Activated naive CD8-positive, alpha-beta T cell treated with anti-CD3 and anti-CD28 coated beads, Interleukin-2, amount 10 ng/mL, durations not matched to agents 7 days and 5 days (primary cell): ENCODE measurements at regions of chr2 and their contacts with region 1.

Region 1: DNA sequence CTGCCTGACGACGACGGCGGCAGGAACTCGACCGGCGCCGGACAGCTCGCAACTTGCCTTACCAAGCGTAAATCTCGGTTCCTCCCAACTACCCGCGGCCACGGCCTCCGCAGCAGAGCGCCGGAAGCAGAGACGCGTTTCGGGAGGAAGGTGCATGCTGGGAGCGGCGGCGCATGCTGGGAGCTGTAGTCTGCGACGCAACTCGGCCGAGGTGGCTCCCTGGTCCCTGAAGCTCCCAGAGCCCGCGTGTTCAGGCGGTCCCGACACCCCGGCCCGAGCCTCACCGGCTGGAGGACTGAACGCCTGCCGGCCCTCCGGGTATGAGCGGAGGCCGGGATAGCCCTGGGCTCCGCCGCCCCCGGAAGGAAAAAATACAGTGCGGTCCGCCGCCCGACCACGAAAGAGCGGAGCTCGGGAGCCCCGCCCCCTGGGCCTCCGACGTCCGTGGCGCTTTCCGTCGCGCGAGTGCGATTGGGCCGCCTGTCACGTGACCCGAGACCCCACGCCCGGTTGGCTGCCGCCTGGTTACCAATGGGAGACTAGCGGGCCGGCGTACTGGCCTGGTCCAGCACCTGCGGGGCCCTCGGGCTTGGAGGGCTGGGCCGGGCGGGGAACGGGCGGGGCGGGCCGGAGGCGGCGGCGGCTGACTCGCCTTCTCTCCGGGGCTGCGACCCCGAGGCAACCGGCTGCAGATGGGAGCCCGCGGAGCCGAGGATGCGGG is at the start of gene CAPN10:
- DNase-seq: peak; percentile 98
- ATAC-seq: peak; percentile 89
- H3K4me3 Mint-ChIP-seq: peak within 1 kb of the TSS; percentile 95
- H3K27ac Mint-ChIP-seq: peak within 1 kb of the TSS; percentile 95
- H3K4me1 Mint-ChIP-seq: peaks cover 39% of the 10 kb centered on the region
- H3K27me3 Mint-ChIP-seq: no peaks in the 10 kb centered on the region
- total RNA-seq, gene CAPN10: 72.3 to 74.2 TPM

Region 2: DNA sequence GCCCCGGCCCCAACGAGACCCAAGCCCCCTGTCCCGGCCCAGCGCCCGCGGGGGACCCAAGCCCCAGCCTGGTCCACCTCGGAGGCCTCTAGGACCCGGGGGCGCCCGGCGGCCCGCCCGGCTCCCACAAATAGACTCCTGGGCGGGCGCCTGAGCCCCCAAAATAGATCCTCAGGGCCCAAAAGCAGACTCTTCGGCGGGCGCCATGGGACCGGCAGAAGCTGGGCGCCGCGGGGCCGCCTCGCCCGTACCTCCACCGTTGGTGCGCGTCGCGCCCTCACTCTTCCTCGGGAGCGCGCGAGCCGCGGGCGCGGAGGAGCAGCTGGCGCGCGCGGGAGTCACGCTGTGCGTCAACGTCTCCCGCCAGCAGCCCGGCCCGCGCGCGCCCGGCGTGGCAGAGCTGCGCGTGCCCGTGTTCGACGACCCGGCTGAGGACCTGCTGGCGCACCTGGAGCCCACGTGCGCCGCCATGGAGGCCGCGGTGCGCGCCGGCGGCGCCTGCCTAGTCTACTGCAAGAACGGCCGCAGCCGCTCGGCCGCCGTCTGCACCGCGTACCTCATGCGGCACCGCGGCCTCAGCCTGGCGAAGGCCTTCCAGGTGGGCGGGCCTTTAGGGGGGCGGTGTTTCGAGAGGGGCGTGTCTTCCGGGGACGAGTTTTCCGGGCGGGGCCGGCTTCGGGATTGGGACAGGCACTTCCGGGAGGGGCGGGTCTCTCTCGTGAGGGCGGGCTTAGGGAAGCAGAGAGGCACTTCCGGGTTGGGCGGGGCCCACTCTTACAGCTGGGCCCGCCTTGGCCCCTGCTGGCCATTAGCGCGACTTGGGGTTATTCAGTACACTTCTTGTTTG is 25.7 kb before region 1 on chr2:
- POLR2A ChIA-PET with region 1: interaction called, 178 read pairs
- DNase-seq: peak; percentile 100
- ATAC-seq: peak; percentile 47
- H3K4me3 Mint-ChIP-seq: peak overlapping the region; percentile 83
- H3K27ac Mint-ChIP-seq: peak overlapping the region; percentile 75
- H3K4me1 Mint-ChIP-seq: peaks cover 58% of the 10 kb centered on the region
- H3K27me3 Mint-ChIP-seq: no peaks in the 10 kb centered on the region

Region 3: GRCh38 chr2:240611601-240612210 is 25.3 kb after region 1 on chr2:
- POLR2A ChIA-PET with region 1: interaction called, 18 read pairs
- DNase-seq: peak; percentile 47
- ATAC-seq: peak; percentile 34
- H3K4me3 Mint-ChIP-seq: no peak overlapping the region
- H3K27ac Mint-ChIP-seq: no peak overlapping the region
- H3K4me1 Mint-ChIP-seq: peaks cover 23% of the 10 kb centered on the region
- H3K27me3 Mint-ChIP-seq: no peaks in the 10 kb centered on the region

Region 4: GRCh38 chr2:240624950-240625621 is 38.7 kb after region 1 on chr2 and contains the start of gene GPR35:
- POLR2A ChIA-PET with region 1: interaction called, 61 read pairs
- DNase-seq: peak; percentile 82
- ATAC-seq: peak; percentile 59
- H3K4me3 Mint-ChIP-seq: peak within 1 kb of the TSS; percentile 83
- H3K27ac Mint-ChIP-seq: peak within 1 kb of the TSS; percentile 100
- H3K4me1 Mint-ChIP-seq: peaks cover 49% of the 10 kb centered on the region
- H3K27me3 Mint-ChIP-seq: no peaks in the 10 kb centered on the region
- total RNA-seq, gene GPR35: 19.2 to 19.3 TPM

Region 5: DNA sequence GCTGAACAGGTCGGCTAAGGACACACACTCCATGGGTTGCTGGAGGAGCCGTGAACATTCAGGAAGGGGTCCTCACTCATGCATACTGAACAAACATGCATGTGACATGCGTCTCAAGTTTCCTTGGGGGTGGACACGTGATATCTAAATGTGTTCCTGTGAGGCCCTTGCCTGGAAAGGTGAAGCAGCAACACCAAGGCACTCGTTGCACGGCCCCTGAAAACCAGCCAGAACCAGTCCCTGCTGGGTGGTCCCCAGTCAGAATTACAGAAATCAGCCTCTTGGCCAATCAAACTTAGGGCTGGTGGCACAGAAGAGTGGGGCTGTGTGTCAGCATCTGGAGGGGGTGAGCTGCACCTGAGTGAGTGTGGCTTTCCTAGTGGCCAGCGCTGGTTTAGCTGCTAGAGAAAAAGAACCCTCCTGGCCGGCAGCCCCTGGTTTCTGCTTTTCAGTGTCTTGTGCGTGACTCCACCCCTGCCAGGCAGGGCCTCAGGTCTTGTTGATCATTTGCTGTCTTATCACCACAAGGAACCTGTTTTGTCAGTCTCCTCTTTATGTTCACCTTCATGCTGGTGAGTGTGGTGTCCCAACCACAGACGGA is 99.5 kb after region 1 on chr2:
- POLR2A ChIA-PET with region 1: no interaction called
- DNase-seq: peak; percentile 29
- ATAC-seq: no peak
- H3K4me3 Mint-ChIP-seq: no peak overlapping the region
- H3K27ac Mint-ChIP-seq: no peak overlapping the region
- H3K4me1 Mint-ChIP-seq: peaks cover 15% of the 10 kb centered on the region
- H3K27me3 Mint-ChIP-seq: no peaks in the 10 kb centered on the region